ENCODE measurements at regions of chr6 and their contacts with region 1.

Region 1: DNA sequence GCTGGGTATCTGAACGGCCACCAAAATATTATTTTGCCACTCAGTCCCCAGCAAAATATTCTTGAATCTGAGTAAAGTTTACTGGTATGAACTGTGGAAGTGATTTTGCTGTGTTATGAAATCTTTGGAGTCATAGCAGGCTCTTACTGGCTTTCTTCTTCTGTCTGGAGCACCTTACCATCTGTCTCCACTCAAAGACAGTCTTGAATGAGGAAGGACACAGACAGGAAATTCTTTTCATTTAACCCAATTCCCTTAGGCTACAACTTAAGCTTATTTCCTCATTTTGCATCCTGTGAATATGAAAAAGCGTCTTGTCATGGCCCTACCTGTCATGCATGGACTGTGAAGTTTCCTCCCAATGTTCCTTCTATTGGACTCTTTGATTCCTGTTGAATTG is 24.7 kb downstream of the FNDC1 start:
- DNase-seq: no peak
- ATAC-seq: no peak
- H3K4me3 ChIP-seq: no peak overlapping the region
- H3K27ac ChIP-seq: no peak overlapping the region
- H3K4me1 ChIP-seq: no peaks in the 10 kb centered on the region
- H3K27me3 ChIP-seq: no peaks in the 10 kb centered on the region

Region 2: GRCh38 chr6:159529934-159530333 is 336.0 kb after region 1 on chr6:
- intact Hi-C with region 1: loop called in 1 of 4 experiments (anchors 5 kb)
- DNase-seq: peak in 2 of 3 donors; percentile 59 to 74
- ATAC-seq: peak; percentile 47 to 72
- H3K4me3 ChIP-seq: no peak overlapping the region
- H3K27ac ChIP-seq: no peak overlapping the region
- H3K4me1 ChIP-seq: no peaks in the 10 kb centered on the region
- H3K27me3 ChIP-seq: no peaks in the 10 kb centered on the region